Activated CD4-positive, alpha-beta memory T cell treated with anti-CD3 and anti-CD28 coated beads for 36 hours (primary cell): ENCODE measurements at regions of chr5 and their contacts with region 1.

Region 1: GRCh38 chr5:35926389-35927051 is 11.9 kb downstream of the CAPSL start:
- DNase-seq: peak; percentile 65
- H3K4me3 Mint-ChIP-seq: peak overlapping the region; percentile 40
- H3K27ac Mint-ChIP-seq: no peak overlapping the region
- H3K4me1 Mint-ChIP-seq: peaks cover 41% of the 10 kb centered on the region
- H3K27me3 Mint-ChIP-seq: peaks cover 12% of the 10 kb centered on the region

Region 2: DNA sequence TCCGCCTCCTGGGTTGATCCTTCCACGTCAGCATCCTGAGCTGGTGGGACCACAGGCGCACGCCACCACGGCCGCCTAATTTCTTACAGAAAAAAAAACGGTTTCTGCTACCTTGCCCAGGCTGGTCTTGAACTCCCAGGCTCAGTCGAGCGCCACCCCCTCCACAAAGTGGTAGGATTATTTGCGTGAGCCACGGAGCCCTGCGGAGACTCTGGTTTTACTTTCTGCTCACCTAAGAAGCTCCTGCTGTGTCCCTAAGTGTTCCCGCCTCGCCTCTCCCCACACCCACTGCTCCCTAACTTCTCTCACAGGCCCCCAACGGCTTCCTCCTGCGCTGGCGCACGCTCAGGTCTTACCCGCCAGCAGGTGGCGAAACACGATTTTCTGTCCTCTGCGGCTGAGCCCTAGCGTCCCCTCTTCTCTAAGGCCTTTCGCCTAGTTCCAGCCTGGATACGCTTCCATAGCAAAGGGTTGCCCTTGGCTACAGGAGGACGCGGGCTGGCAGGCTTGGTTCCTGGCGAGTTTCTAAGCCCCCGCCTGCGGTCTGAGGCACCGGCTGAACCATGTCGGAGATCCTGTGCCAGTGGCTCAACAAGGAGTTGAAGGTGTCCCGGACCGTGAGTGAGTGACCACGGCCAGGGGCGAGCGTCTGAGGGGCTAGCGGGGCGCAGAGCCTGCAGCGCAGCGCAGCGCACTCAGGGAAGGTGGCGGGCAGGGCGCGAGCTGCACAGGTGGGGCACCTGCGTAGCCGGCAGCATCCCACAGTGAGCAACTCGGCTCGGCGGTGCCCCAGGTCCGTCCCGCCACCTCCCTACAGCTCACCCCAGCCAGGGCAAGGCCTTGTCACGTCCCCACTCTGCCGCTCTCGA is 308.9 kb before region 1 on chr5 and contains the start of gene SPEF2:
- CTCF ChIA-PET with region 1: interaction called, 42 read pairs
- POLR2A ChIA-PET with region 1: interaction called, 3 read pairs
- intact Hi-C with region 1: loop called (anchors 1 kb)
- DNase-seq: peak; percentile 89
- H3K4me3 Mint-ChIP-seq: peak within 1 kb of the TSS; percentile 77
- H3K27ac Mint-ChIP-seq: peak within 1 kb of the TSS; percentile 83
- H3K4me1 Mint-ChIP-seq: peaks cover 34% of the 10 kb centered on the region
- H3K27me3 Mint-ChIP-seq: peaks cover 1% of the 10 kb centered on the region
- total RNA-seq, gene SPEF2: 10.6 to 13.0 TPM

Region 3: DNA sequence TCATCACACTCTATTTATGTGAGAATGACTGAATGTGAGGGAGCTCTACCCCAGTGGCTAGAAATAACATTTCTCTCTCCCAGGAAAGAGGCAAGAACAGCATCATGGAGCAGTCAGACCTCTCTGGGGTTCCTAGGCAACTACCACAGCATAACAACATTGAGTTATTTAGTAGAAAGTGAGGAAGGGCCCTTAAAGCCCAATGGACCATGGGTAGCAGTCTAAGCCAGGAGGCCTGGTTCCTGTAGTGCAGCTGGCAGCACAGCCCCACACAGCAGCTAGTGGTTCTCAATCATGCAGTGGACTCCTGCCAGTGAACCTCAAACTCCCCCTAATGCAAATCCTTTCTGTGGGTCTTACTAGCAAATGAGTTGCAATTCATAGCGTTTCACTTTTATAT is 253.5 kb before region 1 on chr5:
- CTCF ChIA-PET with region 1: interaction called, 6 read pairs
- POLR2A ChIA-PET with region 1: no interaction called
- intact Hi-C with region 1: loop called (anchors 1 kb)
- DNase-seq: peak; percentile 66
- H3K4me3 Mint-ChIP-seq: no peak overlapping the region
- H3K27ac Mint-ChIP-seq: peak overlapping the region; percentile 69
- H3K4me1 Mint-ChIP-seq: peaks cover 60% of the 10 kb centered on the region
- H3K27me3 Mint-ChIP-seq: no peaks in the 10 kb centered on the region

Region 4: DNA sequence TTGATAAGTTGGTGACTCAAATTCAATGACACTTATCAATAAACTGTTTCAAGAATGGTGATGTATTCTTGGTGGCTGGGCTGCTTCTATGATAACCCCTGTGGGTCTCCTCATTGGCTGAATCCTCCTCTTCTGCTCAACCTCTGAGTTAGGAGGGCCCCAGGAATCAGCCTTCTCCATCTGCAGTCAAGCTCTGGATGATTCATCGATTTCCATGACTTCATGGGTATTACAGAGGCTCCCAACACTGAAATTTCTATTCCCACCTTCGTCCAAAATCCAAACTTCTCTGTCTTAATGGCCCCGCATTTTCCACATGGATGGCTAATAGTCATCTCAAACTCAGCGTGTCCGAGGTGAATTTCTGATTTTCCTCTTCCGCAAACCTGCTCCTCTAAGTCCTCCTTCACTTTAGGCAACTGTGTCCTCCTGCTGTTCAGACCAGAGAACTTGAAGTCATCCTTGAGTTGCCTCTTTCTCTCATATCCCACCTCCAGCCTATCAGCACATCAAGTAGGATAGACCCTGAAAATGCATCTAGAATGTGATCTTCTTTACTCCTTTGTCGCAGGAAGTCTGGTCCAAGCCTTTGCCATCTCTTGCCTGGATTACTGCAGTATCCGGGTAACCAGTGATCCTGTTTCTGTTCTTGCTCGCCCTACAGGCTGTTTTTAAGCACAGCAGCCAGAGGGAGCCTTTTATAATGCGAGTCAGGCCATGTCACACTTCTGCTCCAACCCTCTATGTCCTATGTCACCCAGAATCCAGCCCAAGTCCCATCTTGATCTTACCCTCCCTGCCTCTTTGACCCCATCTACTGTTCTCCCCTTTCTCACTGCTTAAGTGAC is 111.2 kb before region 1 on chr5:
- CTCF ChIA-PET with region 1: interaction called, 32 read pairs
- POLR2A ChIA-PET with region 1: no interaction called
- intact Hi-C with region 1: loop called (anchors 1 kb)
- DNase-seq: peak; percentile 71
- H3K4me3 Mint-ChIP-seq: no peak overlapping the region
- H3K27ac Mint-ChIP-seq: no peak overlapping the region
- H3K4me1 Mint-ChIP-seq: peaks cover 52% of the 10 kb centered on the region
- H3K27me3 Mint-ChIP-seq: no peaks in the 10 kb centered on the region

Region 5: DNA sequence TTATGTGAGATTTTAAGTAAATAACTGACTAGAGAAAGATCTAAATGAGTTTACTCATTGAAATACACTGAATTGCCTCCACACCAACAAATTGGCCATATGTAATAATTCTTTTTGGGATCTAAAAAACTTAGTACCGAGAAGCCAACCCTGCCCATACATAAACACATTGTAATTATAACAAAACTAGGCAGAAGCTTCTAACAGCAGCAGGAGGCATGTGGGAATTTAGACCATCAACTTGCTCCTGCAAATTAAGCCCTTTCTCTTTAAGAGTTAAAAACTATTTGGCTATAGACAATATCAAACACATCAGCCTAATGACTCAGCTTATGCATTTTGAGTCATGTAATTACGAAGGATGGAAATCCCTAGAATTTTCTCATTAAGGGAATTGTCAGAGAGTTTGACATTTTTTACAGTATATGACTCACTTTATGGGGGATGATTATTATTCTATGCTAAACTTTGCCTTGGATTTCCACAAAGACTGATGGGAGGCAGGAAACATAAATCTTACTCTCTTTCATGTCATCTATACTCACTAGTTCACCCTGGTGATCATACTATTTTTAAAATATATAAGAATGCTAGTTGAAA is 68.8 kb before region 1 on chr5:
- CTCF ChIA-PET with region 1: interaction called, 37 read pairs
- POLR2A ChIA-PET with region 1: interaction called, 19 read pairs
- intact Hi-C with region 1: loop called (anchors 1 kb)
- DNase-seq: no peak
- H3K4me3 Mint-ChIP-seq: peak overlapping the region; percentile 93
- H3K27ac Mint-ChIP-seq: peak overlapping the region; percentile 100
- H3K4me1 Mint-ChIP-seq: peaks cover 76% of the 10 kb centered on the region
- H3K27me3 Mint-ChIP-seq: no peaks in the 10 kb centered on the region

Region 6: DNA sequence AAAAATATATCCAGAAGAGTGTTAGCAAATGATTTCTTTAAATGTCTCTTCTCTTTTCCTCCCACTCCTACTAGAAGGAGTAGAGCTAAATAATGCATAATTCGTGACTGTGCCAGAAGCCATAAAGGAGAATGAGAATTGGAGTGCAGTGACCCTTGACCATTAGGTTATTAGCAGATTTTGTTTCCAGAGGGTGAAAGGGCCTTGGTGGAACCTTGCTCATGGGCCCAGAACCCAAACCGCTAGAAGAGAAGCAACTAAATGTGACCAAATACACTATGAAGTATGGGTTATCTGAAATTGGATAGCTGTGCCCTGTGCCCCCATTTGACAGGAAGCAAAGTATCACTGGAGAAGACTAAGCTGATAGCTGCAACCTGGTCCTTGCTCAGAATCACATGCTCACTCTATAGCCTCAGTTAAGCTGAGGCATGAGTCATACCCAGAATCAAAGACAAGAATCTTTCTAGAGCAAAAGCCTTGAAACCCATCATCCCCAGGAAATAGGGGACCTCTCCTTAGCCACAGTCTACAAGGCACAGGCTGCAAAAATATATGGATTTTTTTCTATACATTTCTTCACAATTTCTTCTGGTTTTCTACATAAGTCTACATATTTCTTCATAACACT is 24.4 kb before region 1 on chr5:
- CTCF ChIA-PET with region 1: interaction called, 14 read pairs
- POLR2A ChIA-PET with region 1: interaction called, 4 read pairs
- intact Hi-C with region 1: loop called (anchors 1 kb)
- DNase-seq: peak; percentile 44
- H3K4me3 Mint-ChIP-seq: peak overlapping the region; percentile 41
- H3K27ac Mint-ChIP-seq: peak overlapping the region; percentile 79
- H3K4me1 Mint-ChIP-seq: peaks cover 77% of the 10 kb centered on the region
- H3K27me3 Mint-ChIP-seq: no peaks in the 10 kb centered on the region

Region 7: GRCh38 chr5:36017004-36017403 is 90.5 kb after region 1 on chr5:
- CTCF ChIA-PET with region 1: no interaction called
- POLR2A ChIA-PET with region 1: no interaction called
- intact Hi-C with region 1: no loop called
- DNase-seq: no peak
- H3K4me3 Mint-ChIP-seq: no peak overlapping the region
- H3K27ac Mint-ChIP-seq: no peak overlapping the region
- H3K4me1 Mint-ChIP-seq: no peaks in the 10 kb centered on the region
- H3K27me3 Mint-ChIP-seq: peaks cover 5% of the 10 kb centered on the region

Region 8: DNA sequence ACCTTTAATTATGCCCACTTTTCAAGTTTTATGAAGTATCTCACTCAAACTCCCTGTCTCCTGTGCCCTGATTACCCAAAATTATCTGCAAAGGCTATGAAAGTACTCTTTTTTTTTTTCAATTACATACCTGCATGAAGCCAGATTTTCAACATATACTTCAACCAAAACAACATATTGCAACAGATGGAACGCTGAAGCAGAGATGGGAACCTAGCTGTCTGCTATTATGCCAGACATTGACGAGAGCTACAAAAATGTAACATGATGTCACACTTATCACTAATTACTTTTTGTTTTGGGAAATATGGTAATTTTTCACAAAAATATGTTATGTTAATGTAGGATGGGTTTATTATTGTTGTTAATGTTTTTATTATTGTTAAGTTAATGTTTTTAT is 593.4 kb after region 1 on chr5:
- CTCF ChIA-PET with region 1: no interaction called
- POLR2A ChIA-PET with region 1: no interaction called
- intact Hi-C with region 1: no loop called
- DNase-seq: no peak
- H3K4me3 Mint-ChIP-seq: no peak overlapping the region
- H3K27ac Mint-ChIP-seq: no peak overlapping the region
- H3K4me1 Mint-ChIP-seq: no peaks in the 10 kb centered on the region
- H3K27me3 Mint-ChIP-seq: no peaks in the 10 kb centered on the region